HepG2 (cell line): ENCODE measurements at regions of chr5 and their contacts with region 1.

Region 1: GRCh38 chr5:149128023-149128875 is 13.0 kb upstream of the ABLIM3 start:
- DNase-seq: no peak
- ATAC-seq: peak; percentile 93
- H3K4me3 ChIP-seq: no peak overlapping the region
- H3K27ac ChIP-seq: no peak overlapping the region
- H3K4me1 ChIP-seq: 0 out of 2 replicates have a peak, but pooled peaks cover 6% of the 10 kb centered on the region
- H3K27me3 ChIP-seq: 0 out of 5 replicates have a peak, but pooled peaks cover 0 to 5% of the 10 kb centered on the region in 2 experiments
- CTCF ChIP-seq: peak; percentile 68
- EP300 ChIP-seq: no peak
- POLR2A ChIP-seq: no peak
- RAD21 ChIP-seq: no peak

Region 2: DNA sequence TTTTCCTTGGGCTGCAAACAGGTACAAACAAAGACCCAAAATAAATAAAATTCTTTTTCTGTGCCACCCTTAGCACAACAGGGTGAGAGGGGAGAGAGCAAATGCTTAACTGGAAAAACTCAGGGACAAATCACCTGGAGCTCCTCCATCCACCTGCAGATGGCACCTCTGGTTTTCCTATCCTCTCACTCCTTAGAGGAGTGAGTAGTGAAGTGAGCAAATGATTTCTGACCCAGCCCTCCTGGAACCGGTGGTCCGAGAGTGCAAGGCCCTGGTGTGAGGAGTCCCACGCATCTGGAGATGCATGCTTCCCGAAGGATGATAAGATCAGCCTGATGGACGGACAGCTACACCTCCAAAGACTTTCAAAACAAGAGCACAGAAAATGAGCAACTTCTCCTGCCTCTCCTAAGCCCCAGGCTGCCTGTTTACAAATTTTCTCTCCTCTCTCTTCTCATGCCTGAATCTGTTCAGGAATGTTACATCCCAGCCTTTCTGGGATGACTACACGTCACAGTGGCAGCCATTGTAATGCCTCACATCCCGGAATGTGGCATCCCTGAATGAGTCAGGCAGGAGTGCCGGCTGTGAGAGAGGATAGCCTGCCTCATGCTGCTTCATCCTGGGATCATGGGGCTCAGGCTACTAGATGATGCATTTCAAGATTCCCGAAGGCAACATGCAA is 215.4 kb before region 1 on chr5:
- CTCF ChIA-PET with region 1: no interaction called
- POLR2A ChIA-PET with region 1: no interaction called
- in situ Hi-C with region 1: no loop called
- intact Hi-C with region 1: no loop called
- DNase-seq: peak; percentile 16
- ATAC-seq: peak; percentile 79
- H3K4me3 ChIP-seq: no peak overlapping the region
- H3K27ac ChIP-seq: no peak overlapping the region
- H3K4me1 ChIP-seq: no peaks in the 10 kb centered on the region
- H3K27me3 ChIP-seq: no peaks in the 10 kb centered on the region
- CTCF ChIP-seq: peak; percentile 49
- EP300 ChIP-seq: no peak
- POLR2A ChIP-seq: no peak
- RAD21 ChIP-seq: no peak

Region 3: DNA sequence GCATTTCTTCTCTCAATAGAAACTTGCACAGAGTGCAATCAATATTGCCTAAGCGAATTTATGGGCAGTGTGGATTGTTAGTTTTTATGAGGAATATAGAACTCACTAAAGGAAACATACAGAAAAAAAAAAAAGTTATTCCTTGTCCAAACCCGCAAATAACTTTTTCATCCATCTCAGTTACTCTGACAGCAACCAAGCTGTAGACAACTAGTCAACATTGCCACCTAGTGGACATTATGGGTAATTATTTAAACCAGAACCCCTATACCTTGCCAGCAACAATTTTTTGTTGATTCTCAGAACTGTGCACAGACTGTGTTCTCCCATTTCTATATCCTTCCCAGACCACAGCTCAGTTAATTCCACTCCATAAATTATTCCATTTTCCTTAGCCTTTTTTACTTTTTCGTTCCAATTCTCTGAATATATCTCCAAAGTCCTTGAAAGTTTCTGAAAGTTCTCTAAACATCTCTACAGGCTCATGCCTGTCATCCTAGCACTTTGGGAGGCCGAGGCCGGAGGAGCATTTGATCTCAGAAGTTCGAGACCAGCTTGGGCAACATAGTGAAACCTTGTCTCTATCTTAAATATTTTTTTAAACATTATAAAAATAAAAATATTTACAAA is 140.8 kb after region 1 on chr5:
- CTCF ChIA-PET with region 1: interaction called, 8 read pairs
- POLR2A ChIA-PET with region 1: no interaction called
- in situ Hi-C with region 1: no loop called
- intact Hi-C with region 1: loop called (anchors 1 kb)
- DNase-seq: peak; percentile 49
- ATAC-seq: no peak
- H3K4me3 ChIP-seq: no peak overlapping the region
- H3K27ac ChIP-seq: no peak overlapping the region
- H3K4me1 ChIP-seq: peaks cover 29% of the 10 kb centered on the region
- H3K27me3 ChIP-seq: peaks cover 7 to 23% of the 10 kb centered on the region in 2 experiments
- CTCF ChIP-seq: peak; percentile 71
- EP300 ChIP-seq: no peak
- POLR2A ChIP-seq: no peak
- RAD21 ChIP-seq: no peak

Region 4: GRCh38 chr5:149576021-149576420 is 447.8 kb after region 1 on chr5:
- CTCF ChIA-PET with region 1: no interaction called
- POLR2A ChIA-PET with region 1: no interaction called
- in situ Hi-C with region 1: loop called (anchors 25 kb)
- intact Hi-C with region 1: loop called (anchors 10 kb)
- DNase-seq: no peak
- ATAC-seq: no peak
- H3K4me3 ChIP-seq: no peak overlapping the region
- H3K27ac ChIP-seq: no peak overlapping the region
- H3K4me1 ChIP-seq: peaks cover 34% of the 10 kb centered on the region
- H3K27me3 ChIP-seq: peaks cover 0 to 19% of the 10 kb centered on the region in 2 experiments; a peak in 1 of 5 replicates
- CTCF ChIP-seq: no peak
- EP300 ChIP-seq: no peak
- POLR2A ChIP-seq: no peak
- RAD21 ChIP-seq: no peak